ENCODE measurements at regions of chr1 and their contacts with region 1.

Region 1: GRCh38 chr1:89085781-89086180 is 20.8 kb upstream of the GBP1 start:
- DNase-seq: peak in 1 of 3 donors; percentile 54
- ATAC-seq: peak in 3 of 4 donors; percentile 82 to 97 (median 96)
- H3K4me3 ChIP-seq: no peak overlapping the region
- H3K27ac ChIP-seq: no peak overlapping the region
- H3K4me1 ChIP-seq: no peaks in the 10 kb centered on the region
- H3K27me3 ChIP-seq: no peaks in the 10 kb centered on the region
- CTCF ChIP-seq: peak in 3 of 4 donors; percentile 58 to 88 (median 75)
- POLR2A ChIP-seq: no peak

Region 2: DNA sequence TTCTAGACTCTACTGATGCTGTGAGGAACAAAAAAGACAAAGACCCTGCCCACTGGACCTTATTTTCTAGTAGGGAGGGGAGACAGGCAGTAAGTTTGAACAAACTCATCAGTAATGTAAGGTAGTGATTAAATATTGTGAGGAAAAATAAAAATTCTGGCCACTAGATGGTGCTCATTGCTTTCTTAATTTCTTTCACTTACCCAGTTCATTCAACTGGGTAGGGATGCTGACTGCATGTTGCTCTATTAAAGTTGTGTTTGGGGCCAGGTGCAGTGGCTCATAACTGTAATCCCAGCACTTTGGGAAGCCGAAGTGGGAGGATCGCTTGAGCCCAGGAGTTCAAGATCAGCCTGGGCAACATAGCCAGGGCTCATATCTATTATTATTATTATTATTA is 87.1 kb before region 1 on chr1:
- intact Hi-C with region 1: no loop called
- DNase-seq: no peak
- ATAC-seq: peak; percentile 94 to 97 (median 97)
- H3K4me3 ChIP-seq: no peak overlapping the region
- H3K27ac ChIP-seq: no peak overlapping the region
- H3K4me1 ChIP-seq: no peaks in the 10 kb centered on the region
- H3K27me3 ChIP-seq: no peaks in the 10 kb centered on the region
- CTCF ChIP-seq: peak; percentile 56 to 83 (median 58)
- POLR2A ChIP-seq: no peak

Region 3: GRCh38 chr1:89037186-89037585 is 48.6 kb before region 1 on chr1:
- intact Hi-C with region 1: no loop called
- DNase-seq: no peak
- ATAC-seq: peak in 1 of 4 donors; percentile 34
- H3K4me3 ChIP-seq: no peak overlapping the region
- H3K27ac ChIP-seq: no peak overlapping the region
- H3K4me1 ChIP-seq: no peaks in the 10 kb centered on the region
- H3K27me3 ChIP-seq: no peaks in the 10 kb centered on the region
- CTCF ChIP-seq: no peak
- POLR2A ChIP-seq: no peak

Region 4: DNA sequence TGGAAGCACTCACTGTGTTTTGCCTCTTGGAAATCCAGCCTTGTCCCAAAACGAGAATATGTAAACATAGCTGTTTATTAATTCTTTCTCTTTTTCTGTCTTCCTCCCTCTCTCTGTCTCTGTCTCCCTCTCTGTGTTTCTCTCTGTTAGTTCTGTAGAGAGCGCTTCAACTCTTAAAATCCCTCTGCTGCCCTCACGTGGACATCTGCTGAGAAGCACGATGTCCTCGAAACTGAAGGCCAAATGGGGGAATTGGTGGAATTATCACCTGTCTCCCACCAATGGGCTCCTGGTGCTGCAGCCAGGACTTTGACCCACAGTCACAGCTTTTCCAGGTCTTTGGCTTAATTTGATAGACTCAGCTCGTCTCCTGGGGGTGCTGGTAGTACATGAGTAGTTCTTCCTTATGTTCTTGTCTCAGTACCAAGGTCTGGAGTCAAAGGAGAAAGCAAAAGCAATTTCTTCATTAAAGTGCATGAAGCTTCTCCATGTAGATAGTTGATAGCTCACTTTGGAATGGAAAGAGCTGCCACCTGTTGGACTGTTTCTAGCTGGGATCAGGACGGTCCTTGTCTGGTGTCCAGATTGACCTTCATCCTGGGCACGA is 272.6 kb after region 1 on chr1:
- intact Hi-C with region 1: loop called in 1 of 2 experiments (anchors 10 kb)
- DNase-seq: peak; percentile 77 to 81 (median 79)
- ATAC-seq: peak; percentile 97 to 98 (median 98)
- H3K4me3 ChIP-seq: peak overlapping the region in 1 of 3 donors; percentile 8
- H3K27ac ChIP-seq: peak overlapping the region in 2 of 3 donors; percentile 39 to 62
- H3K4me1 ChIP-seq: peaks cover 0 to 15% (median 0%) of the 10 kb centered on the region in 4 donors
- H3K27me3 ChIP-seq: no peaks in the 10 kb centered on the region
- CTCF ChIP-seq: peak; percentile 73 to 82 (median 78)
- POLR2A ChIP-seq: no peak

Measured in right lobe of liver (tissue), 6 donors.